Mammary epithelial cell (primary cell): ENCODE measurements at regions of chr3 and their contacts with region 1.

Region 1: DNA sequence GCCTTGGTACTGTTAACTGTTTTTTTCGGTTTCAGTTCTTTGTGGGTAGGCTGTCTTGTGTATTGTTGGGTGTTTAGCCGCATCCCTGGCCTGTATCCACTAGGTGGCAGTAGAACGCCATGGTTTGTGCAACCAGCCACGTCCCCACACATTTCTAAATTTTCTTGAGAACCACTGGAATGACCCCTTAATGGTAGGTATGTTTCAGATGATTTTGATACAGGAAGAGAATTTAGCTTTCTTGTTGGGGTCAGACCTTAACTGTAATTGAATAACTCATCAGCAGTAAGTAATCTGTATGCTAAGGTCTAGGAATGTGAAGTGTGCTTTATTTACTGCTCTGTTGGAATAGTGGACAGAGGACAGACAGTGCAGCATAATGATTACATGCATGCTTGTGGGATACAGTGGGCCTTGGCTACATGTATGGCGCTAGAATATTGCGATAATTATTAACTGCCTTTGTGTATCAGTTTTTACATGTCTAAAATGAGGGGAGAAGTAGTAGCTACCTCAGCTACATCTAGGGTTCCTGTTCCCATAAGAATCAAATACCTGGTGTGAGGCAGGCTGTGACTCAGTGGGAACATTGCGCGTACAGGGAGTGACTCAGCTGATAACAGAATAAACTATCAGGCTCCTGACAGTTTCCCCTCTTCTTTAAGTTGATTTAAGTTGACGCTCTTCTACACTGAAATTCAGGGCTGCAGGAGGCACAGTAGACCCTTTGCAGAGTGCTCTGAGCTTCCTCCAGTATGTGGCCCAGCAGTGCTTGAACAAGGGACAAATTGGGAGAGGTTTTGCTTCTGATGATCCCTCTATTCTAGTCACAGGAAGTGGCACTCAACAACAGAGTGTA is 25.0 kb upstream of the GPR171 start:
- DNase-seq: peak; percentile 63
- H3K4me3 ChIP-seq: no peak overlapping the region
- H3K27ac ChIP-seq: no peak overlapping the region
- H3K4me1 ChIP-seq: peaks cover 27% of the 10 kb centered on the region
- H3K27me3 ChIP-seq: no peaks in the 10 kb centered on the region
- CTCF ChIP-seq: peak; percentile 91 to 94

Region 2: DNA sequence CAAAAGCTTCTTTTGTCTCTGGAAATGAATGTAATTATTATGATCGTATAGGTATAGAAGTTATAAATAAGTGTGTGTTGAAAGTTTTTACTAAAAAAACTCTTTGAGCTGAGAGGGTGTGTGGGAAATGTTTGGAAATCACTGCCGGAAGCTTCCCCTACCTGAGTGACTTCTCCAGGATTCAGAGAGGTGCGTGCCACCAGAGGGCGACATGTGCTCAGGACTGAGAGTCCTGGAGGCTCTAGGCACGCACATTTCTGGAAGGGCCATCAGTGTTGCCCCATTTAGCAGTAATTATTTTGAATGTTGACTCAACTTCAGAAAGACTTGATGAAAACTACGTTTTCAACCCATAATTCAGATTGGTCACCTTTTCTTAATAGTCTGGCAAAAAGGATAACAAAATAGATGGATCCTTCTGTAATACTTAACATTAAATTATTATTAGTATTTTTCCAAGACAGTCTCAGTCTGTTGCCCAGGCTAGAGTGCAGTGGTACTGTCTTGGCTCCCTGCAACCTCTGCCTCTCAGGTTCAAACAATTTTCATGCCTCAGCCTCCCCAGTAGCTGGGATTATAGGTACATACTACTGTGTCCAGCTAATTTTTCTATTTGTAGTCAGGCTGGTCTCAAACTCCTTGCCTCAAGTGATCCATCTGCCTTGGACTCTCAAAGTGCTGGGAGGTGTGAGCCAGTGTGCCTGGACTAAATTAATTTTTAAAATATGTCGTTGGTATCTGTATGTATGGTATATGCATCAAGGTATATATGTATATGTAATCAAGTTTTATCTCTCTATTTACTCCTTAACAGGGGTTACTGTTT is 59.6 kb before region 1 on chr3:
- CTCF ChIA-PET with region 1: interaction called, 3 read pairs
- dilution Hi-C with region 1: no loop called
- in situ Hi-C with region 1: no loop called
- intact Hi-C with region 1: loop called (anchors 1 kb)
- DNase-seq: peak; percentile 48
- H3K4me3 ChIP-seq: no peak overlapping the region
- H3K27ac ChIP-seq: no peak overlapping the region
- H3K4me1 ChIP-seq: peaks cover 2% of the 10 kb centered on the region
- H3K27me3 ChIP-seq: no peaks in the 10 kb centered on the region
- CTCF ChIP-seq: peak; percentile 81 to 94

Region 3: GRCh38 chr3:151265866-151266265 is 37.8 kb after region 1 on chr3:
- CTCF ChIA-PET with region 1: no interaction called
- dilution Hi-C with region 1: loop called (anchors 5 kb)
- in situ Hi-C with region 1: no loop called
- intact Hi-C with region 1: no loop called
- DNase-seq: no peak
- H3K4me3 ChIP-seq: no peak overlapping the region
- H3K27ac ChIP-seq: no peak overlapping the region
- H3K4me1 ChIP-seq: no peaks in the 10 kb centered on the region
- H3K27me3 ChIP-seq: peaks cover 4% of the 10 kb centered on the region
- CTCF ChIP-seq: no peak

Region 4: DNA sequence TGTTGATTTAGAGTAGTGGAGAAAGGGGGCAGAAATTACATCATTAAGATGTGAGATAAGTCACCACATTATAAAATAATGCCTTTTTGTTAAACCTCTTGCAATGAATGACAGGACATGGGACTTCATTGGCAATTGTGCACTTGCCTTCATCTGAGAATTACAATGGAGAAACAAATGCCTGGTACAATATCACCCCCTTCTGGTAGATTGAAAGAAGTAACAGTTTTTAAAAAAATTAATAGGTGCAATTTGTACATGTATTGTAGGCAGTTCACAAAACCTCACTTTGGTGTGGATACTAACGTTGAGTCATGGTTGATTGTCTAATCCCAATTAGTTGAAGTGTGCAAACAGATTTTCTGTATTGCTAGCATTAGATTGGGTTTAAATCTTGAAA is 54.9 kb after region 1 on chr3:
- CTCF ChIA-PET with region 1: no interaction called
- dilution Hi-C with region 1: no loop called
- in situ Hi-C with region 1: no loop called
- intact Hi-C with region 1: loop called (anchors 1 kb)
- DNase-seq: peak; percentile 42
- H3K4me3 ChIP-seq: no peak overlapping the region
- H3K27ac ChIP-seq: no peak overlapping the region
- H3K4me1 ChIP-seq: peaks cover 5% of the 10 kb centered on the region
- H3K27me3 ChIP-seq: peaks cover 2% of the 10 kb centered on the region
- CTCF ChIP-seq: peak; percentile 48 to 64

Region 5: GRCh38 chr3:151327571-151328198 is 99.6 kb after region 1 on chr3:
- CTCF ChIA-PET with region 1: no interaction called
- dilution Hi-C with region 1: no loop called
- in situ Hi-C with region 1: no loop called
- intact Hi-C with region 1: loop called (anchors 2 kb)
- DNase-seq: no peak
- H3K4me3 ChIP-seq: no peak overlapping the region
- H3K27ac ChIP-seq: no peak overlapping the region
- H3K4me1 ChIP-seq: peaks cover 21% of the 10 kb centered on the region
- H3K27me3 ChIP-seq: no peaks in the 10 kb centered on the region
- CTCF ChIP-seq: peak; percentile 55 to 61

Region 6: DNA sequence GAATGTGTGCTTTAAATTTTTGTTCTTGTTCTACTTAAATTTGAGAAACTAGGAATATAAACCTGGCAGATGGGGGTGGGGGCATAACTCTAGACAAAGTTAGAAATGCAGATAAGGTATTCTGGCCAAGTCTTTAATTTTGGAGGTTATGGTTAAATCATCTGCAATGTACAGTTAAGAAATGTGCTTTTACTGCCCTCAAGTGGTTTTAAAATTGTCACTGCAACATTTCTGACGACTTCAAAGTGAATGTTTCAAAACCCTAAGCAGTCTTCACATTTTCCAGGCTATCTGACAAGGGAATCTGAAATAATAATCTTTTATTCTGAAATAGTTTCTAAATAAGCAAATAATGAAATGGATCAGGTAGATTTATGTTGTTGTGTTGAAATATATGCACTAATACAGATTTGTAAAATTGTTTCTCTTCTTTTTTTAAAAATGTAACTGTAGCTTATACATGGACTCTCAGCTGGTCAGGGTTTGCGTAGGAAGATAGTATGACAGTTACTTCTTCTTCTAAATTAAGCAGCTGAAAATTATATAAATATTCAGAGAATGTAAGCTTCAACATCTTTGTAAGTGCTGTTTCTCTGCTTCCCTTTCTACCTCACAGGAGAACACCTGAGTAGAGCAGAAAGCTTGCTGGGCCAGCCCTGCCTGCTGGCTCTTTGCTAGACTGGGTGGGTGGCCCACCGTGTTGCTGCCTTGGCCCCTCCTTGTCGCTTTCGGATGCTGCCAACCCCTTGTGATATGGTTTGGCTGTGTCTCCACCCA is 690.4 kb after region 1 on chr3:
- CTCF ChIA-PET with region 1: no interaction called
- dilution Hi-C with region 1: no loop called
- in situ Hi-C with region 1: no loop called
- intact Hi-C with region 1: loop called (anchors 5 kb)
- DNase-seq: peak; percentile 26
- H3K4me3 ChIP-seq: no peak overlapping the region
- H3K27ac ChIP-seq: no peak overlapping the region
- H3K4me1 ChIP-seq: no peaks in the 10 kb centered on the region
- H3K27me3 ChIP-seq: no peaks in the 10 kb centered on the region
- CTCF ChIP-seq: peak; percentile 63 to 67